Common myeloid progenitor, CD34-positive (primary cell): ENCODE measurements at regions of chr17 and their contacts with region 1.

Region 1: DNA sequence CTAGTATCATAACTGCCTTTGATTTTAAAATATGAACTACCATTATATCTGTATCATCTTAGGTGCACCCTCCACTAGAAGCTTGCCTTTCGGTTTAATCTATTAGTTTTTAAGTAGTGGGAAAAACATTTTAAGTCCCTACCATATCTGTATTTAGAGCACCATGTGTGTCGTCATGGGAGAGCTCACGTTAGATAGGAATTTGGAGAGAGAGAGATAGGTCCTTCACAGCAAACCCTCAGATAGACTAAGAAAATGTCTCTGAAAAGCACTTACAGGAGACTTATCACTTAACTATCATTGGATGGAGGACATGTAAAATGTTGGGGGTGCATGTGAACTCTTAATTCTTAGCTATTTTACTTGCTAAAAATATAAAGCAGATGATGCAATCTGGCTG is 28.5 kb upstream of the BRIP1 start:
- DNase-seq: no peak
- H3K4me3 ChIP-seq: no peak overlapping the region
- H3K27ac ChIP-seq: no peak overlapping the region
- H3K4me1 ChIP-seq: no peaks in the 10 kb centered on the region
- H3K27me3 ChIP-seq: no peaks in the 10 kb centered on the region

Region 2: GRCh38 chr17:61966191-61966590 is 74.4 kb after region 1 on chr17:
- CTCF ChIA-PET with region 1: no interaction called
- POLR2A ChIA-PET with region 1: interaction called, 10 read pairs
- DNase-seq: peak; percentile 26 to 66 (median 50)
- H3K4me3 ChIP-seq: no peak overlapping the region
- H3K27ac ChIP-seq: peak overlapping the region in 1 of 2 experiments; percentile 52
- H3K4me1 ChIP-seq: peaks cover 0 to 5% (median 3%) of the 10 kb centered on the region in 4 experiments
- H3K27me3 ChIP-seq: no peaks in the 10 kb centered on the region